ENCODE measurements at regions of chr7 and their contacts with region 1.

Region 1: DNA sequence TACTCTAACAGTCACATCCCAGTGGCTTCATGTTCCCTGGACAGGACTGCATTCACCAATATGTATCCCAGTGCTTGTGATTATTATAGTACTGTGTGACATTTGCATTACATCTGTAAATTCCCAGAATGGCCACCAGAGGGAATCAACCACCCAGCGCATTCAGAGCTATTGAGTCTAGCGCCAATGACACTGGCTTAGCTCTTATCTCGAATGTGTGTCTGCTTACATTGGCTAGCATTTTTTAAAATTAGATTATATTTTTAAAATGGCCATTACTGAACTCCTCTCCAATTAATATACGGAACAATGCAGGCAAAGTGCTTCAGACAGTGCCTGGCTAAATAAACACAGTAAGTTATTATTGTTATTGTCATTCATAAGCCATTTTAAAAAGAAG is 36.3 kb downstream of the TRIL start:
- DNase-seq: peak; percentile 67
- ATAC-seq: peak; percentile 96
- H3K4me3 ChIP-seq: no peak overlapping the region
- H3K27ac ChIP-seq: no peak overlapping the region
- H3K4me1 ChIP-seq: peaks cover 5 to 10% of the 10 kb centered on the region in 2 experiments; a peak in 3 of 4 replicates
- H3K27me3 ChIP-seq: no peaks in the 10 kb centered on the region
- CTCF ChIP-seq: peak; percentile 79 to 83 (median 82)
- POLR2A ChIP-seq: no peak
- RAD21 ChIP-seq: peak; percentile 75

Region 2: DNA sequence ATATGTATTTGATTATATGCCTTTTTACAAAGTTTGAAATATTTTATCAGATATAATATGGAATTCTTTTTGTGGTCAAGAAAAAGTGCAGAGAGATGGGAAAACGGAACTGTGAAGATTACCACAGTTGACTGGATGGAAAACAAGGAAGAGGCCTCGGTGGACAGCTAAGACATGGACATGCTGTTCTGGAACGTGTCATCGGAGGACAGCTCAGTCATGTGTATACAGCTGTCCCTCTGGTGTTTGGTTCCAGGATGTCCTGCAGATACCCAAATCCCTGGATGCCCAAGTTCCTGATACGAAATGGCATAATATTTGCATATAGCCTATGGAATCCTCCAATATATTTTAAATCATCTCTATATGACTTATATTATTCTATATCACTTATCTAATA is 13.0 kb before region 1 on chr7:
- CTCF ChIA-PET with region 1: interaction called, 11 read pairs
- POLR2A ChIA-PET with region 1: no interaction called
- RAD21 ChIA-PET with region 1: no interaction called
- intact Hi-C with region 1: no loop called
- DNase-seq: no peak
- ATAC-seq: no peak
- H3K4me3 ChIP-seq: no peak overlapping the region
- H3K27ac ChIP-seq: no peak overlapping the region
- H3K4me1 ChIP-seq: no peaks in the 10 kb centered on the region
- H3K27me3 ChIP-seq: no peaks in the 10 kb centered on the region
- CTCF ChIP-seq: no peak
- POLR2A ChIP-seq: no peak
- RAD21 ChIP-seq: no peak

Region 3: GRCh38 chr7:29113384-29114103 is 191.7 kb after region 1 on chr7:
- CTCF ChIA-PET with region 1: interaction called, 356 read pairs
- POLR2A ChIA-PET with region 1: interaction called, 3 read pairs
- RAD21 ChIA-PET with region 1: no interaction called
- intact Hi-C with region 1: no loop called
- DNase-seq: peak; percentile 36
- ATAC-seq: peak; percentile 89
- H3K4me3 ChIP-seq: no peak overlapping the region
- H3K27ac ChIP-seq: no peak overlapping the region
- H3K4me1 ChIP-seq: peaks cover 3 to 20% of the 10 kb centered on the region in 2 experiments; a peak in 3 of 4 replicates
- H3K27me3 ChIP-seq: no peaks in the 10 kb centered on the region
- CTCF ChIP-seq: peak; percentile 46 to 56 (median 54); a peak in 5 of 6 replicates
- POLR2A ChIP-seq: no peak
- RAD21 ChIP-seq: peak; percentile 74

Region 4: GRCh38 chr7:29345600-29345999 is 423.8 kb after region 1 on chr7:
- CTCF ChIA-PET with region 1: interaction called, 22 read pairs
- POLR2A ChIA-PET with region 1: no interaction called
- RAD21 ChIA-PET with region 1: interaction called in 1 of 2 experiments, 8 read pairs
- intact Hi-C with region 1: loop called (anchors 2 kb)
- DNase-seq: peak; percentile 10
- ATAC-seq: peak; percentile 65
- H3K4me3 ChIP-seq: no peak overlapping the region
- H3K27ac ChIP-seq: no peak overlapping the region
- H3K4me1 ChIP-seq: peaks cover 0 to 8% of the 10 kb centered on the region in 2 experiments; a peak in 1 of 4 replicates
- H3K27me3 ChIP-seq: no peaks in the 10 kb centered on the region
- CTCF ChIP-seq: peak; percentile 38 to 44 (median 43); a peak in 4 of 6 replicates
- POLR2A ChIP-seq: no peak
- RAD21 ChIP-seq: peak; percentile 70

Measured in HCT116 (cell line).